Left colon (tissue), 2 donors: ENCODE measurements at regions of chr12 and their contacts with region 1.

Region 1: GRCh38 chr12:20369305-20370005 is 1.1 kb downstream of the PDE3A start:
- DNase-seq: peak; percentile 82 to 83
- ATAC-seq: peak; percentile 68

Region 2: DNA sequence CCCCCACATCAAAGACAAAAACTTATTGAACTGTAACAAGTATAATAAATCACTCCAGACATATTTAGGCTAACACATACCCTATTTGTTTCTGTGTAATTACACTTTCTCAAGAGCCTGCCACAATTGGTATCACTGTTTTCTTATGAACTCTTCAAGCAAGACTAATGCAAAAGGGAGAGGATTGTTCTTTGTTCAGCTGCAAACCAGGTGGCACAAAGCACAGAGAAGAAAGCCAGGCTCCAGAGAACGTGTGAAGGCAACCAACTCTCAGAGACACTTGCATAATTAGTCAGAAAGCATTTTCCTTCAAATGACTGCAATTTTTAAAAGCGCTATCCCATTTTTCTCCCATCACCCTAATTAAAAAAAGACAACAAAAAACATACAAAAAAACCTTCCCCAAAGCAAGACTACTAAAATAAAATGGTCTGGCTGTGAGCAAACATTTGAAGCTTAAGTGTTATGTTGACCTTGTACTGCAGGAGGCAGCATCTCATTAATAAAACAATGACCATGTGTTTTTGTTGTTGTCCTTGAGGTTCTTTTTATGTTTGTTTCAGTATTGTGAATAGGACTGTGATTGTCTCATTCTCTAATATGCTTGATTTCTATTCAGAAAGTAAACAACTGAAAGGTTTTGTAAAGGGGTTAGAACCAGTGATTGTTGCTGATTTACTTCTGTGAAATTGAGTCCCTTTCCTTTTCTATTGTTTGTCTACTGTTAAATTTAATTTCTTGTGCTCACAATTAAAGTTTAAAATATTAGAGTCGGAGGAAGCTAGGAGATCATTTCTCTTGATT is 453.9 kb before region 1 on chr12:
- intact Hi-C with region 1: loop called in 1 of 2 experiments (anchors 10 kb)
- DNase-seq: no peak
- ATAC-seq: peak; percentile 57

Region 3: DNA sequence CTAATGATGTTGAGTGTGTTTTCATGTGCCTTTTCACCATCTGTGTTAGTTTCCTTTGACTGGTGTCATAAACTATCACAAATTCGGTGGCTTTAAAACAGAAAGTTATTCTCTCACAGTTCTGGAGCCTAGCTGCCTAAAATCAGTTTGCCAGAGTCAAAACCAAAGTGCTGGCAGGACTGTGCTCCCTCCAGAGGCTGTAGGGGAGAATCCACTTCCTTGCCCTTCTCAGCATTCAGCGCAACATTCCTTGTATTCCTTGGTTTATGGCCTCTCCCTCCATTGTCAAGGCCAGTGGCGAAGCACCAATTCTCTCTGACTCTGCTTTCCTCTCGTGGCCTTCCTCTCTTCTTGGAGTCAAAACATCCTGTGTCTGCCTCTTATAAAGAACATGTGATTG is 175.3 kb before region 1 on chr12:
- intact Hi-C with region 1: no loop called
- DNase-seq: no peak
- ATAC-seq: no peak

Region 4: GRCh38 chr12:20212658-20213555 is 156.5 kb before region 1 on chr12:
- intact Hi-C with region 1: loop called in 1 of 2 experiments (anchors 10 kb)
- DNase-seq: peak; percentile 36 to 79
- ATAC-seq: peak; percentile 76

Region 5: GRCh38 chr12:20596061-20596460 is 226.6 kb after region 1 on chr12:
- intact Hi-C with region 1: loop called in 1 of 2 experiments (anchors 10 kb)
- DNase-seq: no peak
- ATAC-seq: no peak

Region 6: GRCh38 chr12:20822415-20822814 is 453.0 kb after region 1 on chr12:
- intact Hi-C with region 1: no loop called
- DNase-seq: no peak
- ATAC-seq: no peak